ENCODE measurements at regions of chr17 and their contacts with region 1.

Region 1: GRCh38 chr17:67800495-67800928 is 24.8 kb upstream of the BPTF start:
- DNase-seq: peak; percentile 48
- ATAC-seq: peak; percentile 95
- H3K4me3 ChIP-seq: no peak overlapping the region
- H3K27ac ChIP-seq: no peak overlapping the region
- H3K4me1 ChIP-seq: no peaks in the 10 kb centered on the region
- H3K27me3 ChIP-seq: no peaks in the 10 kb centered on the region
- CTCF ChIP-seq: peak; percentile 83

Region 2: GRCh38 chr17:67151717-67152116 is 648.8 kb before region 1 on chr17:
- CTCF ChIA-PET with region 1: no interaction called
- POLR2A ChIA-PET with region 1: interaction called, 12 read pairs
- in situ Hi-C with region 1: no loop called
- intact Hi-C with region 1: no loop called
- DNase-seq: no peak
- ATAC-seq: no peak
- H3K4me3 ChIP-seq: no peak overlapping the region
- H3K27ac ChIP-seq: no peak overlapping the region
- H3K4me1 ChIP-seq: no peaks in the 10 kb centered on the region
- H3K27me3 ChIP-seq: no peaks in the 10 kb centered on the region
- CTCF ChIP-seq: no peak

Region 3: DNA sequence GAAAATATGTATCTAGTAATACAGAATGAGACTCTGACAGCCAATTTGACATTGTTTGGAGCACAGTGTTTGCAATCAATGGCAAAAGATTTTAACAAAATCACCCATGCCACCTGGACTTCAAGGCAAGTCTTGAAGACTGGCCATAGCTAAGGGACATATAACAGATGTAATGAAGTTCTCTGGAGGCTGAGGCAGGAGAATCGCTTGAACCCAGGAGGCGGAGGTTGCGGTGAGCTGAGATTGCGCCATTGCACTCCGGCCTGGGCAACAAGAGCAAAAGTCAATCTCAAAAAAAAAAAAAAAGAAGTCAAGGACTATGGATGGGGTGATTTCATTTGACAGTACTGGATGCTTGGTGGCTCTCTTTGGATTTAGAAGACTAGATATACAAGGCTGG is 19.2 kb after region 1 on chr17:
- CTCF ChIA-PET with region 1: no interaction called
- POLR2A ChIA-PET with region 1: interaction called, 10 read pairs
- in situ Hi-C with region 1: no loop called
- intact Hi-C with region 1: no loop called
- DNase-seq: no peak
- ATAC-seq: no peak
- H3K4me3 ChIP-seq: no peak overlapping the region
- H3K27ac ChIP-seq: no peak overlapping the region
- H3K4me1 ChIP-seq: no peaks in the 10 kb centered on the region
- H3K27me3 ChIP-seq: no peaks in the 10 kb centered on the region
- CTCF ChIP-seq: no peak

Measured in Panc1 (cell line).